GM12878 (cell line): ENCODE measurements at regions of chr7 and their contacts with region 1.

Region 1: GRCh38 chr7:65382452-65382851 is 8.8 kb downstream of the ZNF92 start:
- DNase-seq: no peak
- ATAC-seq: peak; percentile 58
- H3K4me3 ChIP-seq: peak overlapping the region; percentile 8; the same call in 1 of the 2 replicates
- H3K27ac ChIP-seq: peak overlapping the region; percentile 13; the same call in 1 of the 2 replicates
- H3K4me1 ChIP-seq: peaks cover 3% of the 10 kb centered on the region
- H3K27me3 ChIP-seq: no peaks in the 10 kb centered on the region
- CTCF ChIP-seq: no peak
- EP300 ChIP-seq: no peak
- POLR2A ChIP-seq: no peak
- RAD21 ChIP-seq: no peak

Region 2: DNA sequence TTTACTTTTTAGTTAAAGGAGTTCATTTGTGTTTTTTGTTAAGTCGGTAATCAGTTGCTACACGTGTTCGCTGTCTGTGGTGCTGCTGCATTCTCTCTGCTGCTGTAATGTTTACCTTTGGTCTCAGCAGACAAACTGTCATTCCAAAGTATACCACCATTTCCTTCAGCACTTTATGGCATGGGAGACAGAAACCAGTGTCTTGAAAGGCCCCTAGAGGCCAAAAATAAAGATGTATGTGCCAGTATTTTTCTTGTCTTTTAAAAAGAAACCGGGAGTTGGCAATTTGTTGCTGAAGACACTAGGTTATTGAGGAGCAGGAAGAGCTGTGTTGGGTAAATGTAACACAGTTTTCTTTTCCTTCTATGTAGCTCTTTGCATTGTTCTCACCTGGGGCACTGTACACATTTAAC is 15.3 kb after region 1 on chr7:
- CTCF ChIA-PET with region 1: interaction called, 3 read pairs
- POLR2A ChIA-PET with region 1: interaction called, 3 read pairs
- RAD21 ChIA-PET with region 1: no interaction called
- SMC1A ChIA-PET with region 1: interaction called, 13 read pairs
- in situ Hi-C with region 1: no loop called
- intact Hi-C with region 1: no loop called
- DNase-seq: no peak
- ATAC-seq: no peak
- H3K4me3 ChIP-seq: no peak overlapping the region
- H3K27ac ChIP-seq: no peak overlapping the region
- H3K4me1 ChIP-seq: no peaks in the 10 kb centered on the region
- H3K27me3 ChIP-seq: no peaks in the 10 kb centered on the region
- CTCF ChIP-seq: no peak
- EP300 ChIP-seq: no peak
- POLR2A ChIP-seq: no peak
- RAD21 ChIP-seq: no peak